Thyroid gland (tissue), 4 donors: ENCODE measurements at regions of chr17 and their contacts with region 1.

Region 1: DNA sequence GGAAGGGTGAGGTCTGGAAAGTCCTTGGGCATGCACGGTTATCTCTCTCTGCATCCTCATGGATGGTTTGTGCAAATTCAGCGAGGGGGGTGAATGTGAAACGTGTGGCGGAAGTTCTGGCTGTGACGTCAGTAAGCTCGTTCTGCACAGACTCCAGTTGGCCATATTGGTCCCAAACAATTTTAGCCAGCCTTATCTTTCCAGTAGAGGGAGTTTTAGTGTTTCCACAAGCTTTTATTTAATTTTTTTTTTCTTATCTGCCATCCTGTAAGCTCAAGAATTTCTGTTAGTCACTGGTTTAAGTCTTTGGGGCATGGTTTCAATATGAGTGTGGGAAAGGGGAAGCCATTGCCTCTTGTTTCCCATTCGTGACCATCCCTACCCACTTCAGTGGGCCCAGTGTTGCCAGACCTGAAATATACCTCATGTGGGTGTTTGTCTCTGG is 39.0 kb downstream of the HLF start:
- DNase-seq: no peak
- H3K4me3 ChIP-seq: no peak overlapping the region
- H3K27ac ChIP-seq: no peak overlapping the region
- H3K4me1 ChIP-seq: peaks cover 6% of the 10 kb centered on the region in 2 donors
- H3K27me3 ChIP-seq: no peaks in the 10 kb centered on the region
- CTCF ChIP-seq: no peak
- POLR2A ChIP-seq: no peak

Region 2: GRCh38 chr17:55081559-55081958 is 222.2 kb before region 1 on chr17:
- intact Hi-C with region 1: no loop called
- DNase-seq: no peak
- H3K4me3 ChIP-seq: no peak overlapping the region
- H3K27ac ChIP-seq: no peak overlapping the region
- H3K4me1 ChIP-seq: no peaks in the 10 kb centered on the region
- H3K27me3 ChIP-seq: no peaks in the 10 kb centered on the region
- CTCF ChIP-seq: no peak
- POLR2A ChIP-seq: no peak

Region 3: GRCh38 chr17:55263569-55264277 is 40.0 kb before region 1 on chr17:
- intact Hi-C with region 1: loop called (anchors 2 kb)
- DNase-seq: no peak
- H3K4me3 ChIP-seq: no peak overlapping the region
- H3K27ac ChIP-seq: no peak overlapping the region
- H3K4me1 ChIP-seq: peaks cover 22 to 28% of the 10 kb centered on the region in 2 donors
- H3K27me3 ChIP-seq: no peaks in the 10 kb centered on the region
- CTCF ChIP-seq: no peak
- POLR2A ChIP-seq: no peak

Region 4: GRCh38 chr17:55341432-55341831 is 37.7 kb after region 1 on chr17:
- intact Hi-C with region 1: loop called (anchors 5 kb)
- DNase-seq: no peak
- H3K4me3 ChIP-seq: no peak overlapping the region
- H3K27ac ChIP-seq: no peak overlapping the region
- H3K4me1 ChIP-seq: no peaks in the 10 kb centered on the region
- H3K27me3 ChIP-seq: no peaks in the 10 kb centered on the region
- CTCF ChIP-seq: no peak
- POLR2A ChIP-seq: no peak